CD14-positive monocyte (primary cell): ENCODE measurements at regions of chr6 and their contacts with region 1.

Region 1: GRCh38 chr6:87825821-87826221 is 123.8 kb upstream of the AKIRIN2 start:
- DNase-seq: peak; percentile 59 to 86 (median 80)
- H3K4me3 ChIP-seq: no peak overlapping the region
- H3K4me3 Mint-ChIP-seq: peak overlapping the region in 1 of 2 donors; percentile 57
- H3K27ac ChIP-seq: peak overlapping the region in 1 of 2 donors; percentile 81
- H3K27ac Mint-ChIP-seq: peak overlapping the region; percentile 87 to 94 (median 90)
- H3K4me1 ChIP-seq: peaks cover 35 to 43% of the 10 kb centered on the region in 2 donors
- H3K4me1 Mint-ChIP-seq: peaks cover 41% of the 10 kb centered on the region
- H3K27me3 ChIP-seq: no peaks in the 10 kb centered on the region
- H3K27me3 Mint-ChIP-seq: no peaks in the 10 kb centered on the region
- CTCF ChIP-seq: no peak

Region 2: DNA sequence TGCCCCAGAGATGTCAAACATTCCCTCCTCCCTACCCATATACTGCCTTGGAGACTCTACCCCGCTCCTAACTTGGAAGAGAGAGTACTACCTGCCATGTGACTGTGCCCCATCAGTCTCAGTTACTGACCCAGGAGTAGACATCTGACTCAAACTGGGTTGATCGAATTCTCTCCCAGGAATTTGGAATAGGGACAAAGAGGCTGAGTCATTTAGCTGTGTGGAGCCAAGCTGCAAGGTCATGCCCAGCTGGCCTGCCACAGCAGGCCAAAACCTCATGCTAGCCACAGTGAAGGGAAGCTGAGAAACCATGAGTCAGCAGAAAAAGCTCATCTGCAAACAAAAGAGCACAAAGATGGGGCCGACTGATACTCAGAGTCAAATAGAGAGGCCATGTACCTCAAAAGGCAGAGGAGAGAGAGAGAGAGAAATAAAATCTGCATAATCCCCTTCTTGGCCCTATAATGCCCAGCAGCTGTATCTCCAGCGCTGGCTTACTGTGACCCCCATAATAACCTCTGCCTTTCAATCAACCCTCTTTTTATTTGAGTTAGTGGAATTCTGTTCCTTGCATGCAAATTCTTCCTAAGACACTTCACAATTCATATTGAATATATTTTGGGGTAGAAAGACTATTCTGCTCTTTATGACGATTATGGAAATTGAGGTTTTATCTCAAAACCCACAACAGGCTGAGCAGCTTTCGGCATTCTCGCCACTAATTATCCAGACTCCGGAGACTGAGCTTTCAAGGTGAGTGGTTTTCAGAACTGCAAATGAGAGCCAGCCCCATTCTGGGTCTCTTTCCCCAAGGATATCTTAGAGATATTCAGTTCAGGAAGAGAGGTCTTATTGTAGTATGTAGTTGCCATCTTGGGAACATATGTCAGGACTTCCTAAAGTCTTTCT is 102.4 kb before region 1 on chr6:
- intact Hi-C with region 1: loop called in 1 of 2 experiments (anchors 10 kb)
- DNase-seq: peak; percentile 78 to 88 (median 88)
- H3K4me3 ChIP-seq: no peak overlapping the region
- H3K4me3 Mint-ChIP-seq: peak overlapping the region in 1 of 2 donors; percentile 26
- H3K27ac ChIP-seq: peak overlapping the region in 1 of 2 donors; percentile 59
- H3K27ac Mint-ChIP-seq: peak overlapping the region; percentile 60 to 95 (median 87)
- H3K4me1 ChIP-seq: peaks cover 51 to 59% of the 10 kb centered on the region in 2 donors
- H3K4me1 Mint-ChIP-seq: peaks cover 45% of the 10 kb centered on the region
- H3K27me3 ChIP-seq: no peaks in the 10 kb centered on the region
- H3K27me3 Mint-ChIP-seq: peaks cover 0 to 7% (median 0%) of the 10 kb centered on the region in 3 donors
- CTCF ChIP-seq: no peak

Region 3: GRCh38 chr6:88031550-88031949 is 205.7 kb after region 1 on chr6:
- intact Hi-C with region 1: no loop called
- DNase-seq: no peak
- H3K4me3 ChIP-seq: no peak overlapping the region
- H3K4me3 Mint-ChIP-seq: no peak overlapping the region
- H3K27ac ChIP-seq: no peak overlapping the region
- H3K27ac Mint-ChIP-seq: no peak overlapping the region
- H3K4me1 ChIP-seq: no peaks in the 10 kb centered on the region
- H3K4me1 Mint-ChIP-seq: no peaks in the 10 kb centered on the region
- H3K27me3 ChIP-seq: no peaks in the 10 kb centered on the region
- H3K27me3 Mint-ChIP-seq: peaks cover 0 to 2% (median 2%) of the 10 kb centered on the region in 3 donors
- CTCF ChIP-seq: no peak